Endothelial cell of umbilical vein (primary cell): ENCODE measurements at regions of chr6 and their contacts with region 1.

Region 1: GRCh38 chr6:155174576-155175211 is 89.1 kb upstream of the CLDN20 start:
- DNase-seq: peak; percentile 86
- H3K4me3 ChIP-seq: no peak overlapping the region
- H3K27ac ChIP-seq: peak overlapping the region; percentile 7
- H3K4me1 ChIP-seq: peaks cover 32% of the 10 kb centered on the region
- H3K27me3 ChIP-seq: no peaks in the 10 kb centered on the region
- CTCF ChIP-seq: peak; percentile 64 to 73
- POLR2A ChIP-seq: no peak

Region 2: GRCh38 chr6:154675602-154676088 is 499.0 kb before region 1 on chr6:
- CTCF ChIA-PET with region 1: interaction called, 27 read pairs
- POLR2A ChIA-PET with region 1: no interaction called
- dilution Hi-C with region 1: no loop called
- intact Hi-C with region 1: loop called (anchors 1 kb)
- DNase-seq: peak; percentile 99
- H3K4me3 ChIP-seq: no peak overlapping the region
- H3K27ac ChIP-seq: no peak overlapping the region
- H3K4me1 ChIP-seq: no peaks in the 10 kb centered on the region
- H3K27me3 ChIP-seq: no peaks in the 10 kb centered on the region
- CTCF ChIP-seq: peak; percentile 94 to 99
- POLR2A ChIP-seq: peak; percentile 21

Region 3: DNA sequence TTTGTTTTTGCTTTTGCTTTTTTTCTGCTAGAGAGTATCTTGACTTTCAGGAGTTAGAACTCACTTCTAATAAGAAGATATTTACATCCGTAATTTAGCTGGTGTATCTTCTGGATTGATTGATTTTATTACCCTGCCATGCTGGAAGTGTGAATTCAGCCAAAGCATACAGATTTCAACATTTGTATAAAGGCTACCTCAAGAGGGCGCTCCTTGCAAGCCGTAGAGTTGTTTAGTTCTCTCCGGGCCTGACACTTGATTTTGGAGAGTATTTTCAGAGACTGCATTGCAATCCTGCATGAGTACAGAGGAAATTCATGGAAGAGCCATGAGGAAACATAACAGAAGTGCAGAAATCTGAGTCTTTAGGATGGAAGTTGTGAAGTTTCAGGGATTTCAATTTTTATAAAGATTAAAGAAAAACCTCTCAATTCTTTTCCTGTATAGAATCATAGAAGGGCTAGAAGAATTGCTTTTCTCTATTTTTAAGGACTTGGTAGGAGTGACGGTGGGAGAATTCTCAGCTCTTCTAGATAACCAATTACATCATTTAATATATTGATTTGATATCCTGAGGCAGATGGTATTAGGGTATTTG is 246.3 kb before region 1 on chr6:
- CTCF ChIA-PET with region 1: interaction called, 167 read pairs
- POLR2A ChIA-PET with region 1: no interaction called
- dilution Hi-C with region 1: no loop called
- intact Hi-C with region 1: loop called (anchors 1 kb)
- DNase-seq: peak; percentile 76
- H3K4me3 ChIP-seq: no peak overlapping the region
- H3K27ac ChIP-seq: no peak overlapping the region
- H3K4me1 ChIP-seq: peaks cover 13% of the 10 kb centered on the region
- H3K27me3 ChIP-seq: no peaks in the 10 kb centered on the region
- CTCF ChIP-seq: peak; percentile 65 to 73
- POLR2A ChIP-seq: no peak

Region 4: GRCh38 chr6:155079985-155080452 is 94.7 kb before region 1 on chr6:
- CTCF ChIA-PET with region 1: no interaction called
- POLR2A ChIA-PET with region 1: no interaction called
- dilution Hi-C with region 1: no loop called
- intact Hi-C with region 1: loop called (anchors 2 kb)
- DNase-seq: peak; percentile 93
- H3K4me3 ChIP-seq: no peak overlapping the region
- H3K27ac ChIP-seq: peak overlapping the region; percentile 73
- H3K4me1 ChIP-seq: peaks cover 23% of the 10 kb centered on the region
- H3K27me3 ChIP-seq: no peaks in the 10 kb centered on the region
- CTCF ChIP-seq: no peak
- POLR2A ChIP-seq: no peak

Region 5: GRCh38 chr6:155093430-155093829 is 81.3 kb before region 1 on chr6:
- CTCF ChIA-PET with region 1: no interaction called
- POLR2A ChIA-PET with region 1: no interaction called
- dilution Hi-C with region 1: no loop called
- intact Hi-C with region 1: no loop called
- DNase-seq: no peak
- H3K4me3 ChIP-seq: no peak overlapping the region
- H3K27ac ChIP-seq: no peak overlapping the region
- H3K4me1 ChIP-seq: peaks cover 6% of the 10 kb centered on the region
- H3K27me3 ChIP-seq: no peaks in the 10 kb centered on the region
- CTCF ChIP-seq: no peak
- POLR2A ChIP-seq: no peak

Region 6: GRCh38 chr6:155240905-155241600 is 66.4 kb after region 1 on chr6:
- CTCF ChIA-PET with region 1: interaction called, 292 read pairs
- POLR2A ChIA-PET with region 1: no interaction called
- dilution Hi-C with region 1: no loop called
- intact Hi-C with region 1: no loop called
- DNase-seq: no peak
- H3K4me3 ChIP-seq: no peak overlapping the region
- H3K27ac ChIP-seq: no peak overlapping the region
- H3K4me1 ChIP-seq: no peaks in the 10 kb centered on the region
- H3K27me3 ChIP-seq: no peaks in the 10 kb centered on the region
- CTCF ChIP-seq: no peak
- POLR2A ChIP-seq: no peak

Region 7: DNA sequence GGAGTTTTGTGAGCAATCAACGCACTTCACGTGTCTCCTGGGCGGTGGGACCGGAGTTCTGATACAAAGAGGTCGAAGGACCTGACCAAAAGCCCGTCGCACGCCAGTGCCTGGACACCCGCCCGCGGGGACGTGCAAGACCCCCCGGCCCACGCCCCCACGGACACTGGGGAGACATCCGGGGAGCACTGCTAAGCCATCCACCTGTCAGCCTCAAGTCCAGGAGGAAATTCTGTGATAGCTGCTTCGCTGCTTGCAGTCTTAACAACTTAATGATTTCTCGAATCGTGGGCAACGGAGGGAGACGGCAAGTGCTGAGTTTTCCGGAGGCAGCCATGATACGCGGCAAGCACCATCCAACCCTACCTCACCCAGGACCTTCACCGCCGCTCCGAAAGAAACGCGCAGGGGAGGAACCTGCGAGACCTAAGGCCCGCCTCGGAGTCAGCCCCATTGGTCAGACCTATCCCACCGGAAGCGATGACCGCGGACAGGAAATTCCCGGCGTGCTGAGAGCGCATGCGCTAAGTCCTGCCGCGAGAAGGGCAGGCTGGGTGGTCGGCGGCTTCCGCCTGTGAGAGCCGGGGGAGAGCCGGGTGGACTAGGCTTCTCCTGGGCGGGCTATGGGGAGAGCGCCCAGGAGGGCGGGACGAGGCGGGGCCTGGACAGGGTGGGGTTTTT is 139.5 kb after region 1 on chr6 and contains the start of gene TFB1M:
- CTCF ChIA-PET with region 1: interaction called, 36 read pairs
- POLR2A ChIA-PET with region 1: no interaction called
- dilution Hi-C with region 1: no loop called
- intact Hi-C with region 1: loop called (anchors 1 kb)
- DNase-seq: peak; percentile 99
- H3K4me3 ChIP-seq: peak within 1 kb of the TSS; percentile 60 to 100 (median 97)
- H3K27ac ChIP-seq: peak within 1 kb of the TSS; percentile 90
- H3K4me1 ChIP-seq: peaks cover 46% of the 10 kb centered on the region
- H3K27me3 ChIP-seq: no peaks in the 10 kb centered on the region
- CTCF ChIP-seq: no peak
- POLR2A ChIP-seq: peak; percentile 85
- total RNA-seq, gene TFB1M: 30.2 and 35.5 TPM in 2 replicates

Region 8: DNA sequence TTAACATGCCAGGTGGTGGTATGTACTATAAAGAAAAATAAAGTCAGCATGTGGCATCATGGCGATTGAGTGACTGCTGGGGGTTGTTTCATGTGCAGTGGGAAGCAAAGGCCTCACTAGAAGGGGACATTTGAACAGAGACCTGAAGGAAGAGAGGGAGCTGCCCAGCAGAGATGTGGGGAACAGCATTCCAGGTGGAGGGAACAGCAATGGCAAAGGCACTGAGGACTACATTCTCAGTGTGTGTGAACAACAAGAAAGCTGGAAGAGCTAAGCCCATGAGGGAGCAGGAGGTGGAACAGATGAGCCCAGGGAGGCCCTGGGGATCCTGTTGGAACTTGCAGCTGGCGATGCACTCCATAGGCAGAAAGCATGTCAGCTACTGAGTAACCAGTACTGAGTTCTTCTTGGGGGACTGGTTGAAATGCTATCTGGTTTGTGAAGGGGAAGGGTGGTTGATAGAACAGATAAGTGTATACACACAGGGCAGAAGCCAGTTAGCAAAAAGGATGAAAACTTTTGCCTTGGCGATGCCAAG is 251.8 kb after region 1 on chr6:
- CTCF ChIA-PET with region 1: no interaction called
- POLR2A ChIA-PET with region 1: no interaction called
- dilution Hi-C with region 1: no loop called
- intact Hi-C with region 1: no loop called
- DNase-seq: no peak
- H3K4me3 ChIP-seq: no peak overlapping the region
- H3K27ac ChIP-seq: no peak overlapping the region
- H3K4me1 ChIP-seq: peaks cover 19% of the 10 kb centered on the region
- H3K27me3 ChIP-seq: no peaks in the 10 kb centered on the region
- CTCF ChIP-seq: no peak
- POLR2A ChIP-seq: no peak